WTC11 (cell line): ENCODE measurements at regions of chr13 and their contacts with region 1.

Region 1: GRCh38 chr13:30978981-30979956 is 46.8 kb downstream of the TEX26 start:
- DNase-seq: peak; percentile 92
- ATAC-seq: peak; percentile 96
- H3K4me3 Mint-ChIP-seq: no peak overlapping the region
- H3K27ac Mint-ChIP-seq: no peak overlapping the region
- H3K4me1 Mint-ChIP-seq: peaks cover 16% of the 10 kb centered on the region
- H3K27me3 Mint-ChIP-seq: no peaks in the 10 kb centered on the region; the same call in 1 of the 2 replicates
- CTCF ChIP-seq: peak; percentile 83

Region 2: DNA sequence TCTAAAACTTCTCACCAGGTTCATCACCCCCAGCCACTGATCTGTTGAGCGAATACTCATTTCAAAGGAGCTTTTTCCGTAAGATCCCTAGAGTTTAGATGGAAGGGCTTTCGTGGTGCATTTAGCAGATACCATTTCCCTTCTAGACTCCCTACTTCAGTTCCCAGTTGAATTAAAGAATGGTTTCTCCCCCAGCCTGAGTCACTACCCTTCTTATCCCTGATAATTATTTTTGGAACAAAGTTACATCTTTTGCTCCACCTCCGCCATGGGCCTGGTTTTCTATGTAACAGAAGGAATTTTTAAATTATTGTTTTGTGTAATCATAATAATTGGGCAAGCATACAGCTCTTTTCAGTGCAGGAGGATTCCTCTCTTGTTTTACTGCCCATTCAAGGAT is 339.6 kb before region 1 on chr13:
- CTCF ChIA-PET with region 1: no interaction called
- POLR2A ChIA-PET with region 1: no interaction called
- DNase-seq: no peak
- ATAC-seq: no peak
- H3K4me3 Mint-ChIP-seq: no peak overlapping the region
- H3K27ac Mint-ChIP-seq: peak overlapping the region; percentile 6; the same call in 1 of the 2 replicates
- H3K4me1 Mint-ChIP-seq: no peaks in the 10 kb centered on the region
- H3K27me3 Mint-ChIP-seq: no peaks in the 10 kb centered on the region
- CTCF ChIP-seq: no peak

Region 3: DNA sequence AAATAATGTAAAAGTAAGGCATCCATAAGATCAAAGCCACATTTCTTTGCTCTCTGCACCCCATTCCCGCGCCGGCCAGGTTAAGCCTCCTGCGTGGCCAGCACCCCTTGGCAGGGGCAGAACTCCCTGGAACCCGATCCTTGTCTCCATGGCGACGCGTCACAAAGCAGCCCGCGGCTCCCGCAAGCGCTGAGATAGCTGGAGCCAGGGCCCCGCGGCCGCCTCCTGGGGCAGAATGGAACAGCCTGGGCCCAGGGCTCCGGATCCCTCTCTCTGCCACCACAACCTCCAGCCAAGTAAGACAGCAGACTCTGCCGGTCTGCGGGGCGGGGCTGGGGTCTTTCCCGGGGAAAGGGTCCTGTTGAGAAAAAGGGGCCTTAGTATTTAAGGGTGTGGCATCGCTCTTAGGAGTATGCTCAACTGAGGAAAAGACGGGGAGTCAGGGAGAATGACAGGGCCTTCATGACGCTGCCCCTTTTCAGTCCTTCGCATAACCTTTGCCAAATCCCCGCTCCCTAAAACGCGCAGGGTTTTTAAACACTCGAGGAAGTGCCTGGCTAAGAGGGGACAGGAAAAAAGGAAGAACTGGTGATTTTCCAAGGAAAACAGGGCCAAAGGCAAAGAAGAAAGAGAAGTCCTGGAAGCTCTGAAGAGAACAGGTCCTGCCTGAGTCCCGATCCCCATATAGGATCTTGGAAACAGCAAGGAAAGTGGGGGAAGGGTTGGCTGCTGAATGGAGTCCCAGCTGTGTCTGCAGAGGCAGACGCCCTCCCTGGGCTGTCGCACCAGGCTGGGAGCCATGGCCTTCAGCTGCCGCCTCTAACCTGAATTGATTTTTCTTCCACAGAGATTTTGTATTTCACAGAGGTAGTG is 46.6 kb before region 1 on chr13 and contains the start of gene TEX26:
- CTCF ChIA-PET with region 1: interaction called, 10 read pairs
- POLR2A ChIA-PET with region 1: no interaction called
- DNase-seq: peak; percentile 83
- ATAC-seq: peak; percentile 95
- H3K4me3 Mint-ChIP-seq: peak within 1 kb of the TSS; percentile 62
- H3K27ac Mint-ChIP-seq: no peak within 1 kb of the TSS
- H3K4me1 Mint-ChIP-seq: peaks cover 24% of the 10 kb centered on the region
- H3K27me3 Mint-ChIP-seq: peaks cover 30% of the 10 kb centered on the region
- CTCF ChIP-seq: no peak
- total RNA-seq, gene TEX26: not detected in 3 replicates

Region 4: DNA sequence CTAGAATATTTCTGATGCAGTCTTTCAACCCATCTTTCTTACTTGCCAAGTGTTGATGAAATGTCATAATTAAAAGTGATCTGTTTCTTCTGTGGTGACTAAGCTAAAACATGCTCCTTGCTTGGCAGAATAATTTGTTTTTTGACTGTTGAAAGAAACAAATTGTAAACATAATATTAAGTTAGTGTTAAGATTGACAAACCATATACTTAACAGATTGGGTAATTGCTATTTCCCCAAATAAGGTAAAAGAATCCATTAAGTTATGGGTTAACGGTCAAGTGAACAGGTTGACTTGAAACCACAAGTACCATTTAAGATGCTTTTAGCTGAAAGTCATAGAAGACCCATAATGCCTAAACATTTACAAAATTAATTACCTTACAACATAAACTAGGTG is 16.1 kb after region 1 on chr13:
- CTCF ChIA-PET with region 1: interaction called, 19 read pairs
- POLR2A ChIA-PET with region 1: no interaction called
- DNase-seq: no peak
- ATAC-seq: no peak
- H3K4me3 Mint-ChIP-seq: no peak overlapping the region
- H3K27ac Mint-ChIP-seq: no peak overlapping the region
- H3K4me1 Mint-ChIP-seq: no peaks in the 10 kb centered on the region
- H3K27me3 Mint-ChIP-seq: no peaks in the 10 kb centered on the region
- CTCF ChIP-seq: no peak

Region 5: DNA sequence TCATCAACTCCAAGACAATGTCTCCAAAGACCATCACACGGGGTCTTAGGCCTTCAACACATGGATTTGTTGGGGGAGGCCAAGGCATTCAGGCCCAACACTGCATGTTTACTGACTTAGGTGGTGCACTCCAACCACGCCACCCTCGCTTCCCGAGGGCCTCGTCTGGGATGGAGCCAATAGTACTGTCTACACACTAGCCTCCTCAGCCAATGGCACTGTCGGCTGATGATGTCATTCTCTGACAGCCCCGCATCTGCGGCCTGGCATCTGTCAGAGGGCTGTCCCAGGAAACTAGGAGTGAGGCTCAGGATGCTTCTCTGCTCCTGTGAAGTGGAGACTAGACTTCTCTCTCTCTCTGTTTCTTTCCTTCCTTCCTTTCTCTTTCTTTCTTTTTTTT is 49.8 kb after region 1 on chr13:
- CTCF ChIA-PET with region 1: interaction called, 10 read pairs
- POLR2A ChIA-PET with region 1: no interaction called
- DNase-seq: no peak
- ATAC-seq: peak; percentile 55
- H3K4me3 Mint-ChIP-seq: no peak overlapping the region
- H3K27ac Mint-ChIP-seq: no peak overlapping the region
- H3K4me1 Mint-ChIP-seq: no peaks in the 10 kb centered on the region
- H3K27me3 Mint-ChIP-seq: no peaks in the 10 kb centered on the region; the same call in 1 of the 2 replicates
- CTCF ChIP-seq: no peak

Region 6: GRCh38 chr13:31050486-31051400 is 71.5 kb after region 1 on chr13:
- CTCF ChIA-PET with region 1: interaction called, 19 read pairs
- POLR2A ChIA-PET with region 1: no interaction called
- DNase-seq: no peak
- ATAC-seq: peak; percentile 27; the same call in 1 of the 2 replicates
- H3K4me3 Mint-ChIP-seq: no peak overlapping the region
- H3K27ac Mint-ChIP-seq: no peak overlapping the region
- H3K4me1 Mint-ChIP-seq: peaks cover 6% of the 10 kb centered on the region
- H3K27me3 Mint-ChIP-seq: no peaks in the 10 kb centered on the region
- CTCF ChIP-seq: no peak